Right ventricle myocardium inferior (tissue), 1 donor: ENCODE measurements at regions of chr6 and their contacts with region 1.

Region 1: DNA sequence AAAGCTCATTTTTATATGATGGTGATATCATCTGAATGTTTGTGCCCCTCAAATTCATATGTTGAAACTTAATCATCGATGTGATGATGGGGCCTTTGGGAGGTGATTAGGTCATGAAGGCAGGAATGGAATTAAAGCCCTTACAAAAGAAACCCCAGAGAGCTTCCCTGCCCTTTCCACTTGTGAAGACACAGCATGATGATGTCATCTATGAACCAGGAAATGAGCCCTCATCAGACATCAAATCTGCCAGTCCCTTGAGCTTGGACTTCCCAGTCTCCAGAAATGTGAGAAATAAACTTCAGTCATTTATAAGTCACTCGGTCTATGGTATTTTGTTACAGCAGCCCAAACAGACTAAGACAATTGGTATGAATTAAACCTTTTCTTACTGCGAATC is 153.1 kb downstream of the MYB start:
- DNase-seq: no peak
- ATAC-seq: no peak

Region 2: GRCh38 chr6:135358251-135358821 is 24.2 kb after region 1 on chr6:
- intact Hi-C with region 1: loop called (anchors 1 kb)
- DNase-seq: no peak
- ATAC-seq: no peak